CD4-positive, alpha-beta memory T cell (primary cell): ENCODE measurements at regions of chr2 and their contacts with region 1.

Region 1: DNA sequence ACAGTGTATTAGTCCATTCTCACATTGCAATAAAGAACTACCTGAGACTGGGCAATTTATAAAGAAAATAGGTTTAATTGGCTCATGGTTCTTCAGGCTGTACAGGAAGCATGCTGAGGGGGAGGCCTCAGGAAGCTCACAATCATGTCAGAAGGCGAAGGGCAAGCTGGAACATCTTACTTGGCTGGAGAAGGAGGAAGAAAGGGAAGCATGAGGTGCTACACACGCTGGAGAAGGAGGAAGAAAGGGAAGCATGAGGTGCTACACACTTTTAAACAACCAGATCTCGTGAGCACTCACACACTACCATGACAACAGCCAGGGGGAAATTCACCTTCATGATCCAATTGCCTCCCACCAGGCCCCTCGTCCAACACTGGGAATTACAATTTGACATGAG is 95.3 kb upstream of the FAM110C start:
- DNase-seq: no peak
- H3K4me3 ChIP-seq: no peak overlapping the region
- H3K4me3 Mint-ChIP-seq: no peak overlapping the region
- H3K27ac ChIP-seq: no peak overlapping the region
- H3K27ac Mint-ChIP-seq: no peak overlapping the region
- H3K4me1 ChIP-seq: no peaks in the 10 kb centered on the region
- H3K4me1 Mint-ChIP-seq: peaks cover 0 to 2% (median 0%) of the 10 kb centered on the region in 4 donors
- H3K27me3 ChIP-seq: no peaks in the 10 kb centered on the region
- H3K27me3 Mint-ChIP-seq: peaks cover 4 to 5% of the 10 kb centered on the region in 2 donors

Region 2: DNA sequence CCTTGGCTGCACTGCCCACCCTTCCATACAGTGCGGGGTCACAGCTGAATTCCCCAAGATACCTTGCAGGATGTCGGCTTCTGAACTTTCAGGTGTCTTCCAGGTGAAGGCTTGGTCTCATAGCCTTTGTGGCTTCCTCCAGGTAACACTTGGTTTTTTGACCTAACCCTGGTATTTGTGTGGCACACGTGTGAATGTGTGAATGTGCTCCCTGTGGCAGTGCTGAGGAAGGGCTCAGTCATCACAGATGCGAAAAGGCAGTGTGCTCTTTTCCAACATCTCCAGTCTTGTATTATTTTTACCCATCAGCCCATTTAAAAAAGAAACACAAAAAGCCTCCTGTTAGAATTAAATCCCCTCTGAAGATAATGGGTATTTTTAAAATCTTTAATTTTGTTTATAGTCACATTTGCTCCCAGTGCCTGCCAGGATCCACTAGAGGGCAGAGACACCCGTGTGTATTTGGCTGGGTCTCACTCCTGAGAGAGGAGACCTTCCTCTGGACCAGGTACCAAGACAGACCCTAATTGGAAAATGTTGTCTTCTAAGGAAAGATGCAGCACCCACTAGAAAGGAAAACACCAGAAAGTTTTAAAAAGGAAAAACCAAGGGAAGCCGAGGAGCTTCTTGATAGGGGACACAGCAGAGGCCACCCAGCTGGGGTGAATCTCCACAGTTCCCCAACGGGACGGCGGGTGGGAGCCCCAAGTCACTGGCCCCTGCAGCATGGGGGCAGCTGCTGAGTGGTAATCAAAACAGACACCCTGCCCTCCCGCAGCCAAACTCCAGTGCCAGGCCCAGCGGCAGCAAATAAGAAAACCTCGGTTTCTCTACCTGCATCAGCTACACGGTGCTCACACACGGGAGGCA is 123.0 kb before region 1 on chr2:
- CTCF ChIA-PET with region 1: interaction called, 42 read pairs
- POLR2A ChIA-PET with region 1: interaction called, 3 read pairs
- intact Hi-C with region 1: no loop called
- DNase-seq: no peak
- H3K4me3 ChIP-seq: no peak overlapping the region
- H3K4me3 Mint-ChIP-seq: no peak overlapping the region
- H3K27ac ChIP-seq: no peak overlapping the region
- H3K27ac Mint-ChIP-seq: peak overlapping the region in 1 of 7 donors; percentile 25
- H3K4me1 ChIP-seq: peaks cover 4% of the 10 kb centered on the region
- H3K4me1 Mint-ChIP-seq: peaks cover 2 to 7% (median 3%) of the 10 kb centered on the region in 4 donors
- H3K27me3 ChIP-seq: no peaks in the 10 kb centered on the region
- H3K27me3 Mint-ChIP-seq: peaks cover 6 to 8% of the 10 kb centered on the region in 2 donors